Naive thymus-derived CD4-positive, alpha-beta T cell (primary cell): ENCODE measurements at regions of chr3 and their contacts with region 1.

Region 1: GRCh38 chr3:184417619-184418327 is 37.9 kb downstream of the CHRD start:
- DNase-seq: peak; percentile 48 to 76 (median 70)
- ATAC-seq: peak; percentile 96
- H3K4me3 ChIP-seq: no peak overlapping the region
- H3K4me3 Mint-ChIP-seq: no peak overlapping the region
- H3K27ac ChIP-seq: no peak overlapping the region
- H3K27ac Mint-ChIP-seq: no peak overlapping the region
- H3K4me1 ChIP-seq: no peaks in the 10 kb centered on the region
- H3K4me1 Mint-ChIP-seq: no peaks in the 10 kb centered on the region
- H3K27me3 ChIP-seq: no peaks in the 10 kb centered on the region
- H3K27me3 Mint-ChIP-seq: peaks cover 0 to 6% (median 2%) of the 10 kb centered on the region in 5 donors

Region 2: DNA sequence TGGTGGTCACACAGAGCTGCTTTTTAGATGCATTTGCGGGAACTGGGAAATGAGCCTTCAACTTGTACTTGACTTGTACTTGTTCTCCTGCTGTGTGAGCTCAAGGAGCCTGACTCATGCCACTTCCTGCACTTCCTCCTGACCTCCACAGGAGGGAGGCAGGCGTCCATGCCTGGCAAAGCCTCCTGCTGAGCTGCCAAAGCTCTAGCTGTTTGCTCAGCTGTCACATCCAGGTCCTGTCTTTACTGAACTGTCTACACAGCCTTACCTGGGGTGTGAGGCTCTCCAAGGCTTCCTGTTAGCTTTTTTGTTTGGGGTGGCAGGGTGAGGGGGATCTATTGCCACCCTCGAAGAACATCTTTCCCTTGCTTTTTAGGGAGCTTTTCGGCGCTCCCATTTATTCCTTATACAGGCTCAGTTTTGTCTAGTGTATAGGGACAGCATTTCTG is 46.2 kb before region 1 on chr3:
- CTCF ChIA-PET with region 1: no interaction called
- POLR2A ChIA-PET with region 1: no interaction called
- intact Hi-C with region 1: loop called (anchors 1 to 5 kb)
- DNase-seq: peak; percentile 42 to 70 (median 59)
- ATAC-seq: peak; percentile 96
- H3K4me3 ChIP-seq: no peak overlapping the region
- H3K4me3 Mint-ChIP-seq: no peak overlapping the region
- H3K27ac ChIP-seq: no peak overlapping the region
- H3K27ac Mint-ChIP-seq: peak overlapping the region in 8 of 9 donors; percentile 4 to 65 (median 26)
- H3K4me1 ChIP-seq: no peaks in the 10 kb centered on the region
- H3K4me1 Mint-ChIP-seq: peaks cover 5 to 18% (median 10%) of the 10 kb centered on the region in 7 donors
- H3K27me3 ChIP-seq: no peaks in the 10 kb centered on the region
- H3K27me3 Mint-ChIP-seq: peaks cover 4 to 27% (median 8%) of the 10 kb centered on the region in 5 donors

Region 3: GRCh38 chr3:184523825-184524615 is 106.2 kb after region 1 on chr3:
- CTCF ChIA-PET with region 1: interaction called, 4 read pairs
- POLR2A ChIA-PET with region 1: no interaction called
- intact Hi-C with region 1: loop called in 1 of 2 experiments (anchors 5 kb)
- DNase-seq: no peak
- ATAC-seq: peak; percentile 75
- H3K4me3 ChIP-seq: no peak overlapping the region
- H3K4me3 Mint-ChIP-seq: peak overlapping the region in 7 of 10 donors; percentile 31 to 92 (median 55)
- H3K27ac ChIP-seq: no peak overlapping the region
- H3K27ac Mint-ChIP-seq: peak overlapping the region in 2 of 9 donors; percentile 32 to 51
- H3K4me1 ChIP-seq: peaks cover 0 to 5% of the 10 kb centered on the region in 2 donors
- H3K4me1 Mint-ChIP-seq: peaks cover 0 to 22% (median 15%) of the 10 kb centered on the region in 7 donors
- H3K27me3 ChIP-seq: peaks cover 0 to 8% of the 10 kb centered on the region in 2 donors
- H3K27me3 Mint-ChIP-seq: peaks cover 2 to 57% (median 23%) of the 10 kb centered on the region in 5 donors